Astrocyte of the cerebellum (primary cell): ENCODE measurements at regions of chr1 and their contacts with region 1.

Region 1: DNA sequence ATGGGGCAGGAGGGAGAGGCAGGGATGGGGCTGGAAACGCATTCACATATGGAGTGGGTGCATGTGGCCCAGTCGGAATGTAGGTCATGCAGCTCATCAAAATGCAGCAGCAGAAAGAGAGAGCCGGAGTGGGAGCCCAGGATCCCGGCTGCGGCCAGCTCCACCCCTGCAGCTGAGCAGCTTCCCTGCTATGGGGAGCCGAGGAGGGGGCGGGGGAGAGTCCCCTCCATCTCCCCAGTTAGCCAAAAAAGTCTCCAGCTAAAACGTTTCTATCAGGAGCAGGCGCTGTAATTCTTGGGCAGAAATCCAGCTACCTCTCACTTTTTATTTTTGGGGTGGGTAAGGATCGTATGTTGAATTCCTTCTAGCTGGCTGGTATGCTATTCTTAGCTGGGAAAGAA is 39.7 kb downstream of the MRPL37 start:
- DNase-seq: no peak
- H3K4me3 ChIP-seq: no peak overlapping the region
- CTCF ChIP-seq: no peak

Region 2: DNA sequence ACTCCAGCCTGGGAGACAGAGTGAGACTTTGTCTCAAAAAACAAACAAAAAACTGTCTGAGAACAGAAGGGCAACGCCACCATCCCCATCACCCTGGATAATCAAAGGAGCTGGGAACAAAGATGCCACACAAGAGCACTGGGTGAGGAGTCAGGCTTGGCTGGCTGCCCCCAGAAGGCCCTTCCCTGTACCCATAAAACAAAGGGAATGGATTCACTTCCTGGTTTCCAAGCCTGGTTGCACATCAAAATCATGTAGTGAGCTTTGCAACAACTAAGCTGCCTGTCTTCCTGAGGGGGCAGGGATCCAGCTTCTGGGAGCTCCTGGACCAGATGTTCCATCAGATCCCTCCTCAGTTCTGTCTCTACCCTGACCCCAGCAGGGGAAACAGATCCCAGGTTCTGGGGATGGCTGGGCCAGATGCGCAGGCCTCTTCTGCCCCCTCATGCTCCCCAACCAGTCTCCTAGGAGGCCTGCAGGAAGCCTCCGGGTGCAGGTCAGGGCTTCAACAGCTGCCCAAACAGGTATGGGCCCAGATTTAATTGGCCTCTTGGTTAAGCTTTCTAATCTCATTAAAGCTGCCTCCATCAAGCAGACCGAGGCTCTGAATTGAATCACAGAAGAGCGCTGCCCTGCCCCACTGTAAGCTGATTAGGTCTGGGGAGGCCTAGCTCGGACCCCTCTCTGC is 58.1 kb after region 1 on chr1:
- in situ Hi-C with region 1: loop called (anchors 5 kb)
- DNase-seq: no peak
- H3K4me3 ChIP-seq: no peak overlapping the region
- CTCF ChIP-seq: no peak

Region 3: GRCh38 chr1:55064071-55064581 is 824.5 kb after region 1 on chr1:
- in situ Hi-C with region 1: no loop called
- DNase-seq: no peak
- H3K4me3 ChIP-seq: no peak overlapping the region
- CTCF ChIP-seq: peak; percentile 2